ENCODE measurements at regions of chr17 and their contacts with region 1.

Region 1: DNA sequence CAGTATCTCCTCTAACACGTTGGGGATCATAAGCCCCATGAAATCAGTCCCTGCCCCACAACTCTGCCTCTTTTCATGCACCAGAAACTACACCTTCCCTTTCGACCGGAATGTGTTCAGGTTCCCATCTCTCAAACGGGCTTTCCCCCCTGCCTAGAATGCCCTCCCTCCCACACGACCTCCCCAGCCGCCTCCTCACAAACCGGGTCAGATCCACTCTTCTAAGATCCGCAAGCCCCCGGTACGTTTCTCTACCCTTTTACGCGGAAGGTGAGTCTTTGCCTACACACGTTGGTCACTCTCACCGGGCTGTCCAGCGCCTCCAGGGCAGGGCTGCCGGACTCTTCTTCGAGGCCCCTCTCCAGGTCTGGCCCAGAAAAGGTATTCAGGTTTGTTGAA is 708 bp downstream of the DHX33 start:
- DNase-seq: no peak
- ATAC-seq: peak; percentile 6 to 13 (median 11)
- H3K4me3 ChIP-seq: peak overlapping the region; percentile 33 to 100 (median 89)
- H3K27ac ChIP-seq: peak overlapping the region in 8 of 12 donors; percentile 75 to 83 (median 81)
- H3K4me1 ChIP-seq: peaks cover 5 to 26% (median 17%) of the 10 kb centered on the region in 12 donors
- H3K27me3 ChIP-seq: no peaks in the 10 kb centered on the region
- CTCF ChIP-seq: no peak
- POLR2A ChIP-seq: no peak

Region 2: DNA sequence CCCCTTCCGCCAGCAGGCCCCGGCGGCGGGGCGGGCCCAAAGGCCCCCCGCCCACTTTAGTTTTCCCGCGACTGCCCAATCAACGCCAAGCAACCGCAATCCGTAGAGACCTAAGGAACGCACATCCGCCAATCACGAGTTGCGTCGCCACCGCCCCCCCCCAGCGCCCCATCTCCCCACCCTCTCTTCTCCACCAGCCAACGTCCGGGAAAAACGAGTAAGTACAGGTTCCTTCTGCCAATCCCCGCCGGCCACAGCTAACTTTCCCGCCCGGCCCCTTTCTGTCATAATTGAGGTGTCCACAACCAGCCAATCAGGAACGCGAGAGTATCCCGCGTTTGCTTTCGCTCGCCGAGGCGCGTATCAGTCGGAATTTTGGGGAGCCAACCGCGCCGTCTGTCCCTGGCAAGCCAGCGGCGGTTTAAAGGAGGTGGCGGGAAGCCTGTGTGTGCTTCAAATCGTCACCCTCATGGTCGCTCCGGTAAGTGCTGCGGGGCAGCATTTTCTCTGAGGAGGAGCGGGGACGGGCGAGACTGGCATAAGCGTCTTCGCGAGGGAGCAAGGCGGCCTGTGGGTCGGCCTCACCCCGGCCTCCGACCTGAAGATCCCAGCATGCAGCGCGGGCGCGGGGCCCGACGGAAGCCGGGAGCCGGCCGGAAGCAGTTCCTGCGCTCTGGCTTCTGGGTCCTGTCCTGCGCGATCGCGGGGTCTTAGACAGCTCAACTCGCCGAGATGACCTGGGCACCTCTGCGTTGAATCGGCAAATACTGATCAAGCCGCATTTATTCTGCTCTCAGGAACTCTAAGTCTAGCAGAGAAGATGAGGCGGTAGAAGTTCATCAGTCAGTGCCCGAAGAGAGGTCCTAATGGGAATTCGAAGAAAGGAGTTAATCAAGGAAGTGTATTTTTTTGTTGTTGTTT is 18.4 kb after region 1 on chr17 and contains the start of gene MIS12:
- intact Hi-C with region 1: loop called in 1 of 10 experiments (anchors 1 kb)
- DNase-seq: peak; percentile 96 to 99 (median 99)
- ATAC-seq: peak; percentile 95 to 97 (median 96)
- H3K4me3 ChIP-seq: peak within 1 kb of the TSS; percentile 65 to 97 (median 90)
- H3K27ac ChIP-seq: peak within 1 kb of the TSS; percentile 97 to 100 (median 99)
- H3K4me1 ChIP-seq: peaks cover 7 to 35% (median 24%) of the 10 kb centered on the region in 12 donors
- H3K27me3 ChIP-seq: no peaks in the 10 kb centered on the region
- CTCF ChIP-seq: no peak
- POLR2A ChIP-seq: peak in 1 of 2 donors; percentile 54
- total RNA-seq, gene MIS12: 6.6 to 12.1 (median 11.0) TPM